Body of pancreas (tissue), 4 donors: ENCODE measurements at regions of chr16 and their contacts with region 1.

Region 1: DNA sequence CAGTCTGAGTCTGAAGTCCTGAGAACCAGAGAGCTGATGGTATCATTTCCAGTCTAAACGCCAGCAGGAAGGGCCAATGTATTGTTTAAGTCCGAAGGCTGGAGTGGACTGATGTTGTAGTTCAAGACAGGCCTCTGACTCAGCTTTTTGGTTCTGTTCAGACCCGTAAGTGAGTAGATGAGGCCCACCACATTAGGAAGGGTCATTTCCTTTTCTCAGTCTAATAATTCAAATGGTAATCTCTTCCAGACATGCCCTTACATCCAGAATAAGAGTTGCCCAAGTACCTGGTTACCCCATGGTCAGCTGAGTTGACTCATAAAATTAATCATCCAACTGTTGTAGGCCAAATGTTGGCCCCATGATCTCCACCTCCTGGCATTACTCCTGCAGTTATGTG is 442.6 kb upstream of the HSBP1 start:
- DNase-seq: no peak
- ATAC-seq: no peak
- H3K4me3 ChIP-seq: no peak overlapping the region
- H3K27ac ChIP-seq: no peak overlapping the region
- H3K4me1 ChIP-seq: no peaks in the 10 kb centered on the region
- H3K27me3 ChIP-seq: no peaks in the 10 kb centered on the region
- CTCF ChIP-seq: no peak
- POLR2A ChIP-seq: no peak

Region 2: DNA sequence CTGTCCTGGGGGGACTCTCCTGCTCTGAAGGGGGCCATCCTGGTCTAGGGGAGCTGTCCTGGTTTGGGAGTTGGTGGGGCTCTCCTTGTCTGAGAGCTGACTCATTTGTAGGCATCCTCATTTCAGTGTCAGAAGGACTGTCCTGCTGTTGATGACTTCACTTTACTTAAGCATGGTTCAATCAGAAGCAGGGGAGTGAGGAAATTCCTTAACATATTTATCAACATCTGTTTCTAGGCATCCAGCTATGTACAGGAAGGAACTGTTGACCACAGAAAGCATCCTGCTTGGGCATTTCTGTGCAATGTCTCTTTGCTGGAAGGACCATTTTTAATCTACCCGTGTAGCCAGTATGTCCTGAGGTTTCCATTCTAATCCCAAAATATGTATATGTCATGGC is 60.1 kb before region 1 on chr16:
- intact Hi-C with region 1: loop called (anchors 10 kb)
- DNase-seq: no peak
- ATAC-seq: no peak
- H3K4me3 ChIP-seq: no peak overlapping the region
- H3K27ac ChIP-seq: no peak overlapping the region
- H3K4me1 ChIP-seq: no peaks in the 10 kb centered on the region
- H3K27me3 ChIP-seq: no peaks in the 10 kb centered on the region
- CTCF ChIP-seq: no peak
- POLR2A ChIP-seq: no peak

Region 3: GRCh38 chr16:83404261-83404660 is 39.1 kb after region 1 on chr16:
- intact Hi-C with region 1: no loop called
- DNase-seq: no peak
- ATAC-seq: no peak
- H3K4me3 ChIP-seq: no peak overlapping the region
- H3K27ac ChIP-seq: no peak overlapping the region
- H3K4me1 ChIP-seq: no peaks in the 10 kb centered on the region
- H3K27me3 ChIP-seq: no peaks in the 10 kb centered on the region
- CTCF ChIP-seq: no peak
- POLR2A ChIP-seq: no peak

Region 4: GRCh38 chr16:83420206-83420760 is 55.1 kb after region 1 on chr16:
- intact Hi-C with region 1: no loop called
- DNase-seq: no peak
- ATAC-seq: no peak
- H3K4me3 ChIP-seq: no peak overlapping the region
- H3K27ac ChIP-seq: no peak overlapping the region
- H3K4me1 ChIP-seq: no peaks in the 10 kb centered on the region
- H3K27me3 ChIP-seq: no peaks in the 10 kb centered on the region
- CTCF ChIP-seq: no peak
- POLR2A ChIP-seq: no peak